Mammary epithelial cell (primary cell): ENCODE measurements at regions of chr2 and their contacts with region 1.

Region 1: DNA sequence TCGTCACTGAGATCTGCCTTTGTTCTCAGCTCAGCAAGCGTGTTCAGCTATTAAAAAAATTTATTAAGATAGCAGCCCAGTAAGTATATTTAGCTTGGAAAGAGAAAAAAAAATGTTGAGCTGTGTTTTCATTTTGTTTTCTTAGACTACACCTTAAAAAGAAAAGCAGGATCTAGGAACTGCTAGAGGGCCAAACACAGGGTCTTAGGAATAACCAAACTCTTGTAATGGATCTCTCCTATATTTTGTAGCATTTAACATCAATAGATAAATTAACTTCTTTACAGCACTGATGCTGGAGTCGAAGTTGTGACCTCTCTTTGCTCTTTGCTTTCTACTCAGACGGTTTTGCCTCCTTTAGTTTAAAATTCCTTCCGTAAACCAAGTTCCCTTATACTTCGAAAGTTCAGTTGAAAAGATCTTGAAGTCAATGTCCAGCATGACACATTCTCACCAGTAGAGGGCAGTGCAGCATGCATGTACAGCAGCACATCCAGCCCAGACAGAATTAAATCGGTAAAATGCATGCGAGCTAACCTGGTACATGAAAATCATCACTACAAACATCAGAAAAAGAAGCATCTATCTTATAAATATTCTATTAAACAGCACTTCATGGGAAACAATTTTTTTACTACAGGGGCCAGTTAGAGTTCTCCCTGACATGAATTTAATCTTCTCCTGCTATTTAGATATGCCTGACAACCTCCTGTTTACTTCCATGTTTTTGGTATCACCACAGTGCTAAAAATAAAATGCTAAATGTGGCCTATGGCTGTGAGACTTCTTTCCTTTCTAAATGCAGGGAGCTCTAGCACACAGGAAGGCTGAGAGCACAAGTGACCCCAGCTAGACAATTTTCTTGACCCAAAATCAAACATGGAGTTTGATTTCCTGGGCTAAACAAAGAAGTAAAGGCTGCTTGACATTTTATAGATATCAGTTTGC is 48.2 kb upstream of the MAP3K20 start:
- DNase-seq: peak; percentile 73
- H3K4me3 ChIP-seq: no peak overlapping the region
- H3K27ac ChIP-seq: peak overlapping the region; percentile 27
- H3K4me1 ChIP-seq: peaks cover 20% of the 10 kb centered on the region
- H3K27me3 ChIP-seq: no peaks in the 10 kb centered on the region
- CTCF ChIP-seq: peak; percentile 93

Region 2: GRCh38 chr2:172813314-172813888 is 214.1 kb before region 1 on chr2:
- CTCF ChIA-PET with region 1: no interaction called
- dilution Hi-C with region 1: no loop called
- in situ Hi-C with region 1: loop called (anchors 5 to 10 kb)
- intact Hi-C with region 1: no loop called
- DNase-seq: no peak
- H3K4me3 ChIP-seq: no peak overlapping the region
- H3K27ac ChIP-seq: no peak overlapping the region
- H3K4me1 ChIP-seq: no peaks in the 10 kb centered on the region
- H3K27me3 ChIP-seq: no peaks in the 10 kb centered on the region
- CTCF ChIP-seq: peak; percentile 46 to 65

Region 3: GRCh38 chr2:173075781-173076580 is 48.5 kb after region 1 on chr2 and contains the start of gene MAP3K20:
- CTCF ChIA-PET with region 1: interaction called, 5 read pairs
- dilution Hi-C with region 1: no loop called
- in situ Hi-C with region 1: loop called in 1 of 2 experiments (anchors 5 kb)
- intact Hi-C with region 1: loop called (anchors 1 kb)
- DNase-seq: peak; percentile 65
- H3K4me3 ChIP-seq: peak within 1 kb of the TSS; percentile 66 to 88 (median 84)
- H3K27ac ChIP-seq: peak within 1 kb of the TSS; percentile 95
- H3K4me1 ChIP-seq: peaks cover 35% of the 10 kb centered on the region
- H3K27me3 ChIP-seq: no peaks in the 10 kb centered on the region
- CTCF ChIP-seq: peak in 1 of 2 donors; percentile 58
- total RNA-seq, gene MAP3K20: 31.8 to 109 TPM

Region 4: GRCh38 chr2:173090276-173090877 is 62.9 kb after region 1 on chr2:
- CTCF ChIA-PET with region 1: no interaction called
- dilution Hi-C with region 1: no loop called
- in situ Hi-C with region 1: no loop called
- intact Hi-C with region 1: no loop called
- DNase-seq: no peak
- H3K4me3 ChIP-seq: no peak overlapping the region
- H3K27ac ChIP-seq: peak overlapping the region; percentile 40
- H3K4me1 ChIP-seq: peaks cover 19% of the 10 kb centered on the region
- H3K27me3 ChIP-seq: no peaks in the 10 kb centered on the region
- CTCF ChIP-seq: no peak

Region 5: GRCh38 chr2:173151671-173152398 is 124.4 kb after region 1 on chr2:
- CTCF ChIA-PET with region 1: interaction called, 4 read pairs
- dilution Hi-C with region 1: no loop called
- in situ Hi-C with region 1: no loop called
- intact Hi-C with region 1: loop called (anchors 2 kb)
- DNase-seq: peak; percentile 90
- H3K4me3 ChIP-seq: no peak overlapping the region
- H3K27ac ChIP-seq: peak overlapping the region; percentile 86
- H3K4me1 ChIP-seq: peaks cover 57% of the 10 kb centered on the region
- H3K27me3 ChIP-seq: no peaks in the 10 kb centered on the region
- CTCF ChIP-seq: no peak

Region 6: GRCh38 chr2:173210270-173211196 is 183.1 kb after region 1 on chr2:
- CTCF ChIA-PET with region 1: interaction called, 7 read pairs
- dilution Hi-C with region 1: loop called (anchors 10 kb)
- in situ Hi-C with region 1: loop called (anchors 5 kb)
- intact Hi-C with region 1: loop called (anchors 1 kb)
- DNase-seq: peak; percentile 88
- H3K4me3 ChIP-seq: no peak overlapping the region
- H3K27ac ChIP-seq: peak overlapping the region; percentile 72
- H3K4me1 ChIP-seq: peaks cover 17% of the 10 kb centered on the region
- H3K27me3 ChIP-seq: no peaks in the 10 kb centered on the region
- CTCF ChIP-seq: peak; percentile 81 to 88

Region 7: DNA sequence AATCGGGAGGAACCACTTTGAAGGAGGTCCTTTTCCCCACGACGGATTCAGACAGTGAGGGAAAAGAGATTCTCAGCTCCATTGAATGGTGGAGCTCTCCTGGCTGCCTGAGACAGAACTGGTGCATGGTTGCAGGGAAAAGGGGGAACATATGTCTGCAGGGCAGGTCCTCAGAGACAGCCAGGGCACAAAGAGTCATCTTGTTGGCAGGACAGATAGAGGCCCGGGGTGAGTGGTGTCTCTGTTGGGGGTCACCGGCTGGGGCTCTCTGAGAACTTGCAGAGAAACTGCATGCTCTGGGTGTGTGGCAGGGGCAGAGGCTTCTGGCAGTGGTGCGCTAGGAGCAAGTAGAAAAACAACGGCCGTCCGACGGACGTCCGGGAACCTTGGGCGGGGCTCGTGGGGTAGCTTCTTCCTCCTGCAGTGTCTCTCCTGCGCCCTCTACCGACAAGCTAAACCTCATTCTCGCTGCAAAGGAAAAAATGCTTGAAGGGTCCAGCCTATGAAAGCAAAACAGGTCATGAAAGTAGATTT is 421.6 kb after region 1 on chr2:
- CTCF ChIA-PET with region 1: no interaction called
- dilution Hi-C with region 1: no loop called
- in situ Hi-C with region 1: no loop called
- intact Hi-C with region 1: loop called (anchors 1 kb)
- DNase-seq: peak; percentile 74
- H3K4me3 ChIP-seq: peak overlapping the region in 1 of 3 experiments; percentile 20
- H3K27ac ChIP-seq: no peak overlapping the region
- H3K4me1 ChIP-seq: no peaks in the 10 kb centered on the region
- H3K27me3 ChIP-seq: no peaks in the 10 kb centered on the region
- CTCF ChIP-seq: peak; percentile 81 to 90